Activated CD4-positive, alpha-beta memory T cell treated with anti-CD3 and anti-CD28 coated beads, Interleukin-2, amount 10 ng/mL, durations not matched to agents 7 days and 5 days (primary cell): ENCODE measurements at regions of chr7 and their contacts with region 1.

Region 1: GRCh38 chr7:131007394-131008330 is 273.7 kb upstream of the KLF14 start:
- DNase-seq: peak; percentile 72
- H3K4me3 Mint-ChIP-seq: peak overlapping the region; percentile 41
- H3K27ac Mint-ChIP-seq: peak overlapping the region; percentile 81
- H3K4me1 Mint-ChIP-seq: peaks cover 80% of the 10 kb centered on the region
- H3K27me3 Mint-ChIP-seq: no peaks in the 10 kb centered on the region

Region 2: DNA sequence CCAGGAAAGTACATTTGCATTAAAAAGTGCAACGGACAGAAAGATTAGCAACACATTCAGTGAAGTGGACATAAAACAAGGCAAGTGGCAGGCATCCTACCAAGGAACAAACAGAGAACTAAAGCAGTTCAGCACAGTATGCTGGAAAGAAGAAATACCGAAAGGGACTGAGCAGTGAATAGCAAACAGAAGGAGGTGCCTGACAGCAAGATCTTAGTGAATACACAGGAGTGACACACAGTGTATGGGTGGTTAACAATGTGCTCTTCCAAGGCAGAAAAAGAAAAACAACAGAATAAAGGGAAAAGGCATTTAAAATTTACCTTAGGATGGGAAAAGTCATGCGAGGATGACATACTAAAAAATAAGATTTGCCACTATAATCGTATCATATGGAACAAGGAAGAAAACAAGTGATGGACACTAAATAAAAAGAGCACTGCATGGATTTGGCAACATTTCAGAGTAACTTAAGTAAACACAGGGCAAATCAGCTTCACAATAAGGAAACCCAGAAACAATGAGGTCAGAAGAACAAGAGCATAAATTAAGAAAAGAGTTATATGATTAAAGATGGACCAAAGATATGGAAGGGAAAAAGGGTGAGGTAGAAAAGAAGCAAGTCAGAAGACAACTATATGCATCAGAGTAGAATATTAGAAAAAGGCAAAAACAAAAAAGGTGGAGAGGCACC is 486.3 kb before region 1 on chr7:
- CTCF ChIA-PET with region 1: no interaction called
- POLR2A ChIA-PET with region 1: no interaction called
- DNase-seq: no peak
- H3K4me3 Mint-ChIP-seq: no peak overlapping the region
- H3K27ac Mint-ChIP-seq: no peak overlapping the region
- H3K4me1 Mint-ChIP-seq: no peaks in the 10 kb centered on the region
- H3K27me3 Mint-ChIP-seq: no peaks in the 10 kb centered on the region

Region 3: DNA sequence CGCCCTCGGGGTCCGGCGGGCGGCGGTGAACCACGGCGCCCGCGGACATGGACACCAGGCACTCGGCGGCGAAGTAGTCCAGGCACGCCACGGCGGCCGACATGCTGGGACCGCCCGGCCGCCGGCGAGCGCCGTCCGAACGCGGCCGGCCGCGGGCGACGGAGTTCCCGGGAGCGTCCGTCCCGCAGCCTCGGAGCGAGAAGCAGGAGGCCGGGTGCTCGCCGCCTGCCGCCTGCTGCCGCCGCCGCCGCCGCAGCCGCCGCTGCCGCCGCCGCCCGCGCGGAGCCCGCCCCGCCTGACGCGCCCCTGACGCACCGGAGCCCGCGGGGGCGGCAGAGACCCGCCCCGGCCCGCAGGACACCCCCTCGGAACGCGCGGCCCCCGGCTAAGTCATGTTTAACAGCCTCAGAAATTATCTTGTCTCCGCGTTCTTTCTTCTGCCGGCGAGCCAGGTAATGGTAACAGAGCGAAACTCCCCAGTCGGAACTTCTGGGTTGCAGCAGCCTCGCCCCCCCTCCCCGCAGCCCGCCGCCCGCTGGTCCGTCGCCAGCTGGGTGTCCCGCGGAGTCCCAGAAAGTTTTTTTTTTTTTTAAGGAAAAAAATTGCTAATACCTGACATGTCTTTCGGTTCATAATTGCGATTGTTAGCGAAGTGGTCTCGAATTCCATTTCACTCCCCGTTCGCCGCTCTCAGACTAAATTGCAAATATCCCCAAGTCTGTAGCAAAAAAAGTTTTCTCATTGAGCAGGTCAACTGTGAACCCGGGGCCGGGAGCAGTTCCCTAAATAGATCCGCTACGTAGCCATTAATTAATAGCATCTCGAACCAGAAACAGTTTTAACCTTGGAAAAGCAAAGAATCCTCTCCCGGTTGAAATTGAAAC is 273.5 kb before region 1 on chr7 and contains the start of gene KLF14:
- CTCF ChIA-PET with region 1: no interaction called
- POLR2A ChIA-PET with region 1: no interaction called
- DNase-seq: peak; percentile 22
- H3K4me3 Mint-ChIP-seq: peak within 1 kb of the TSS; percentile 71
- H3K27ac Mint-ChIP-seq: no peak within 1 kb of the TSS
- H3K4me1 Mint-ChIP-seq: peaks cover 12% of the 10 kb centered on the region
- H3K27me3 Mint-ChIP-seq: peaks cover 64% of the 10 kb centered on the region
- total RNA-seq, gene KLF14: not detected

Region 4: GRCh38 chr7:130951303-130951975 is 56.2 kb before region 1 on chr7:
- CTCF ChIA-PET with region 1: interaction called, 11 read pairs
- POLR2A ChIA-PET with region 1: interaction called, 127 read pairs
- DNase-seq: no peak
- H3K4me3 Mint-ChIP-seq: no peak overlapping the region
- H3K27ac Mint-ChIP-seq: no peak overlapping the region
- H3K4me1 Mint-ChIP-seq: peaks cover 59% of the 10 kb centered on the region
- H3K27me3 Mint-ChIP-seq: no peaks in the 10 kb centered on the region

Region 5: DNA sequence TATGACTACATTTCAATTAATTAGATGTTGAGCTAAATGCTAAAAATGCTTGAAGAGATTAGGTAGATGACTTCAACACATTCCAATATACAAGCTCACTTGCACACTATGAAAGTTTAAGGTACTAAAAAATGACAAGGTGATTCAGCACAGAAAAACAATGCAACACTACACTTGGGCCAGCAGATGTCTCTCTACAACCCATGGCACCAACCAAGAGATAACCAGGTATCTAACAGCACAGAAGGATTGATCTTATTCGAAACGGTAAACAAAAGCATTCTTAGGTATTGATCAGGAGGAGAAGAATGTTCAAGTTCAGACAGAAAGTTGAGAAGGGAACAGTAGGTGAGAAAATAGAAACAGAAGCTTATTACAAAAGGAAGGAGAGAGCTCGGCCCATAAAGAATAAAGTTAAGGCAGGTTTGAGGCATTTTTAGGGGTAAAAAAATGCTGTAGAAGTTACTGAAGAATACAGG is 25.5 kb before region 1 on chr7:
- CTCF ChIA-PET with region 1: interaction called, 19 read pairs
- POLR2A ChIA-PET with region 1: interaction called, 12 read pairs
- DNase-seq: no peak
- H3K4me3 Mint-ChIP-seq: no peak overlapping the region
- H3K27ac Mint-ChIP-seq: no peak overlapping the region
- H3K4me1 Mint-ChIP-seq: peaks cover 46% of the 10 kb centered on the region
- H3K27me3 Mint-ChIP-seq: no peaks in the 10 kb centered on the region

Region 6: GRCh38 chr7:130996841-130997231 is 10.8 kb before region 1 on chr7:
- CTCF ChIA-PET with region 1: interaction called, 13 read pairs
- POLR2A ChIA-PET with region 1: interaction called, 8 read pairs
- DNase-seq: no peak
- H3K4me3 Mint-ChIP-seq: peak overlapping the region; percentile 51
- H3K27ac Mint-ChIP-seq: peak overlapping the region; percentile 85
- H3K4me1 Mint-ChIP-seq: peaks cover 78% of the 10 kb centered on the region
- H3K27me3 Mint-ChIP-seq: no peaks in the 10 kb centered on the region

Region 7: GRCh38 chr7:131027287-131027773 is 19.7 kb after region 1 on chr7:
- CTCF ChIA-PET with region 1: interaction called, 4 read pairs
- POLR2A ChIA-PET with region 1: interaction called, 31 read pairs
- DNase-seq: peak; percentile 46
- H3K4me3 Mint-ChIP-seq: peak overlapping the region; percentile 14
- H3K27ac Mint-ChIP-seq: peak overlapping the region; percentile 79
- H3K4me1 Mint-ChIP-seq: peaks cover 83% of the 10 kb centered on the region
- H3K27me3 Mint-ChIP-seq: no peaks in the 10 kb centered on the region

Region 8: GRCh38 chr7:131090886-131091692 is 83.4 kb after region 1 on chr7:
- CTCF ChIA-PET with region 1: no interaction called
- POLR2A ChIA-PET with region 1: no interaction called
- DNase-seq: no peak
- H3K4me3 Mint-ChIP-seq: no peak overlapping the region
- H3K27ac Mint-ChIP-seq: no peak overlapping the region
- H3K4me1 Mint-ChIP-seq: peaks cover 26% of the 10 kb centered on the region
- H3K27me3 Mint-ChIP-seq: no peaks in the 10 kb centered on the region

Region 9: DNA sequence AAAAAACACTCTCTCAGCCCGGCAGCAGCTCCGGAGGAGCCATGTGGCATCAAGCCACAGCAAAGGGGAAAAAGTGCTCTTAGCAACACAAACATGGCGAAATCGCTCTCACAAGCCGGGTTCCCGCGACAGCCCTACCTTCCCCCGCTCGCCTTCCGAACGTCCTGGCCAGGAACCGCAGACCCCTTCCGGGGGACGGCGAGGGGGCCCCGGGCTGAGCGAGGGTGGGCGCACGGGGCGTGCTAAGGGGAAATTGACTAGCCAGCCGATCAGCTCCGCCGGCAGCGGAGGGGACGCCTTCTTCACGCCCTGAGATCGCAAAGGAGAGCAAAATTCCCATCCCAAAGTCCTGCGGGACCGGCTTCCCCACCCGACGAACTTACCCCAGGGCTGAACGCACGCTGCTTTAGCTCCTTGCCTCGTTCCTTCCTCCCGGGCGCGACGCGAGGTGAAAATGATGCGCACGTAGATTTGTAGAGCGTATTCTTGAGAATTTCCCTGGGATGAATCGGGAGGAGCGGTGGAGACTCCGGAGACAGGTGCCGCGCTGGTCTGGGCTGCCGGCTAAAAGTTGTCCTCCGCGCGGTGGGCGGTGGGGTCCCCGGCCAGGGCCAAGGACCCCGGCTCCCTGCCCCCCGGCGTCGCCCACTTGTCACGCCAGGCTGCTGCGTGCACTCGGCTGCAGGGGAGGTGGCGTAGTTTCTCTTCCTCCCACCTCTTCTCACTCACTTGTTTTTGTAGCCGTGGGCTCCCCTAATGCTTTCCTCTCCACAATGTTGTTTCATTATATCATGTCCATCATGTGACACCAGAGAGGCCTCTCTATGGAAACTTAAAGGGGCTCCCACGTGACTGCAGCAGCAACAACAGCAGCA is 99.9 kb after region 1 on chr7:
- CTCF ChIA-PET with region 1: no interaction called
- POLR2A ChIA-PET with region 1: interaction called, 12 read pairs
- DNase-seq: peak; percentile 83
- H3K4me3 Mint-ChIP-seq: peak overlapping the region; percentile 98
- H3K27ac Mint-ChIP-seq: peak overlapping the region; percentile 98
- H3K4me1 Mint-ChIP-seq: peaks cover 60% of the 10 kb centered on the region
- H3K27me3 Mint-ChIP-seq: no peaks in the 10 kb centered on the region